GM12878 (cell line): ENCODE measurements at regions of chr11 and their contacts with region 1.

Region 1: GRCh38 chr11:55949330-55949729 is 13.1 kb upstream of the OR5I1 start:
- DNase-seq: no peak
- ATAC-seq: no peak
- H3K4me3 ChIP-seq: no peak overlapping the region
- H3K27ac ChIP-seq: no peak overlapping the region
- H3K4me1 ChIP-seq: no peaks in the 10 kb centered on the region
- H3K27me3 ChIP-seq: no peaks in the 10 kb centered on the region
- CTCF ChIP-seq: no peak
- EP300 ChIP-seq: no peak
- POLR2A ChIP-seq: no peak
- RAD21 ChIP-seq: no peak

Region 2: DNA sequence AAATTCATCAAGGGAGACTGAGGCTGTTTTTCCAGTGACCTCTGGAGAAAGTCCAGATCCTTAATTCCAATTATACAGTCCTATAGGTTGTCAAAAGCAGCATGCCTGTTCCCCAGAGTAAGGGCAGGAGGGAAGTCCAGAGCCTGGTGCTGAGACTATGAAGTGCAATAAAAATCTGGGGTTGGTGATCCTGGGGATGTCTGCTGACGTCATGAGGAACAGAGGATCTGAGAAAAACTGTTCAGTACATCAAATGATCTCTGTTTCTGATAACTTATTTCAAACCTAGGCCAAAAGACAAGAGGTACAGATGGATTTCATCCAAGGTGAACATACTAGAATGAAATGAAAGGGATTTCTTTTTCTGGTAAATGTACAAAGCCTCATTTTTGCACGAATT is 47.0 kb before region 1 on chr11:
- CTCF ChIA-PET with region 1: no interaction called
- POLR2A ChIA-PET with region 1: no interaction called
- RAD21 ChIA-PET with region 1: no interaction called
- SMC1A ChIA-PET with region 1: no interaction called
- in situ Hi-C with region 1: no loop called
- intact Hi-C with region 1: loop called (anchors 5 kb)
- DNase-seq: no peak
- ATAC-seq: no peak
- H3K4me3 ChIP-seq: no peak overlapping the region
- H3K27ac ChIP-seq: no peak overlapping the region
- H3K4me1 ChIP-seq: no peaks in the 10 kb centered on the region
- H3K27me3 ChIP-seq: no peaks in the 10 kb centered on the region
- CTCF ChIP-seq: no peak
- EP300 ChIP-seq: no peak
- POLR2A ChIP-seq: no peak
- RAD21 ChIP-seq: no peak